Naive thymus-derived CD4-positive, alpha-beta T cell (primary cell): ENCODE measurements at regions of chr1 and their contacts with region 1.

Region 1: GRCh38 chr1:24830680-24831272 is 85.5 kb downstream of the CLIC4 start:
- DNase-seq: peak in 7 of 9 donors; percentile 17 to 54 (median 48)
- ATAC-seq: peak; percentile 67
- H3K4me3 ChIP-seq: no peak overlapping the region
- H3K4me3 Mint-ChIP-seq: no peak overlapping the region
- H3K27ac ChIP-seq: no peak overlapping the region
- H3K27ac Mint-ChIP-seq: no peak overlapping the region
- H3K4me1 ChIP-seq: no peaks in the 10 kb centered on the region
- H3K4me1 Mint-ChIP-seq: peaks cover 0 to 7% (median 0%) of the 10 kb centered on the region in 7 donors
- H3K27me3 ChIP-seq: no peaks in the 10 kb centered on the region
- H3K27me3 Mint-ChIP-seq: peaks cover 0 to 5% (median 0%) of the 10 kb centered on the region in 5 donors

Region 2: DNA sequence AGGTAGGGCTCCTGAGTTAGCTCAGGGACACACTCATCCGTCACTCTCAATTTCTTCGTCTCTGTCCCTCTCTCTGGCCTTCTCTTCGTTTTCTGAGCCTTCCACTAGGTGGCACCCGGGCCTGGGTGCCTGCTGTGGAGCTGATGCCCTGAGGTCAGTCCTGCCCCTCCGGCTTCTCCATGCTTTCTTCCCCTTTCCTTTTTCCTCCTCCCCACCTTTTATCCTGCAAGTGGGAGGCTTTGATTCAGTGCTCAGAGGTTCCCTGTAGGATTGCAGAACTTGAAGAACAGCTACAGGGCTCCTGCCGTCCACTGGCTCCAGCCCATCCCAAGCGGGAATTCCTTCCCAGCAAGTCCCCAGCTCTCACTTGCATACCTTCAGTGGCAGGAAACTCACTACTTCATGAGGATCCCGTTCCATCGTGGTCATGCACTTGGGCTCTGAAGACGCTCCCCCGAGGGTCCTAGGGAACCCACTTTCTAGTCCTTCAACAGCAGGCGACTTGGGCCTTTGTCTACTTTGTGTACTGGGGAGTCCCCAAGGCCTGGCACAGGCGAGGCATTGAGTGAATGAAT is 142.1 kb before region 1 on chr1:
- CTCF ChIA-PET with region 1: interaction called, 170 read pairs
- POLR2A ChIA-PET with region 1: interaction called, 6 read pairs
- intact Hi-C with region 1: loop called (anchors 2 kb)
- DNase-seq: peak; percentile 24 to 64 (median 50)
- ATAC-seq: peak; percentile 87
- H3K4me3 ChIP-seq: no peak overlapping the region
- H3K4me3 Mint-ChIP-seq: no peak overlapping the region
- H3K27ac ChIP-seq: no peak overlapping the region
- H3K27ac Mint-ChIP-seq: peak overlapping the region in 1 of 9 donors; percentile 76
- H3K4me1 ChIP-seq: no peaks in the 10 kb centered on the region
- H3K4me1 Mint-ChIP-seq: peaks cover 0 to 5% (median 0%) of the 10 kb centered on the region in 7 donors
- H3K27me3 ChIP-seq: no peaks in the 10 kb centered on the region
- H3K27me3 Mint-ChIP-seq: no peaks in the 10 kb centered on the region

Region 3: DNA sequence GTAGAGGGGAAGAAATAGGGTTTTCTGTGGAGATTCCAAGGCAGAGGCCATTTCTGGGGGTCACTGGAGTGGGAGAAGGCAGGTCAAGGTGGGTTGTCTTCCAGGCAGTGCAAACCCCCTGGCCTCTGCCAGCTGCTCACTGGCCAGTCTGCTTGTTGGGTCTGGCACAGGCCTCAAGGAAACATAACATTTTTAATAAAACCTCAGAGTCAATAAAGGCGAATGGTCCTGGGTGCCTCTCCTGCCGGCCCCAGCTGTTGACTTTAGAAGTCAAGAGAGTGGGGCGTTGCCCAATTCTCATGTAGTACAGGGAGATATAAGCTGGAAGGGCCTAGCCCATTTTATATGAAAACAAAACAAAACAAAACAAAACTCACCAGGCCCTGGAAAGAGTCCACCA is 62.7 kb after region 1 on chr1:
- CTCF ChIA-PET with region 1: no interaction called
- POLR2A ChIA-PET with region 1: no interaction called
- intact Hi-C with region 1: no loop called
- DNase-seq: peak in 1 of 9 donors; percentile 14
- ATAC-seq: no peak
- H3K4me3 ChIP-seq: no peak overlapping the region
- H3K4me3 Mint-ChIP-seq: no peak overlapping the region
- H3K27ac ChIP-seq: no peak overlapping the region
- H3K27ac Mint-ChIP-seq: no peak overlapping the region
- H3K4me1 ChIP-seq: peaks cover 0 to 9% of the 10 kb centered on the region in 2 donors
- H3K4me1 Mint-ChIP-seq: peaks cover 0 to 15% (median 6%) of the 10 kb centered on the region in 7 donors
- H3K27me3 ChIP-seq: no peaks in the 10 kb centered on the region
- H3K27me3 Mint-ChIP-seq: peaks cover 0 to 5% (median 0%) of the 10 kb centered on the region in 5 donors